CD4-positive, alpha-beta memory T cell (primary cell): ENCODE measurements at regions of chr20 and their contacts with region 1.

Region 1: DNA sequence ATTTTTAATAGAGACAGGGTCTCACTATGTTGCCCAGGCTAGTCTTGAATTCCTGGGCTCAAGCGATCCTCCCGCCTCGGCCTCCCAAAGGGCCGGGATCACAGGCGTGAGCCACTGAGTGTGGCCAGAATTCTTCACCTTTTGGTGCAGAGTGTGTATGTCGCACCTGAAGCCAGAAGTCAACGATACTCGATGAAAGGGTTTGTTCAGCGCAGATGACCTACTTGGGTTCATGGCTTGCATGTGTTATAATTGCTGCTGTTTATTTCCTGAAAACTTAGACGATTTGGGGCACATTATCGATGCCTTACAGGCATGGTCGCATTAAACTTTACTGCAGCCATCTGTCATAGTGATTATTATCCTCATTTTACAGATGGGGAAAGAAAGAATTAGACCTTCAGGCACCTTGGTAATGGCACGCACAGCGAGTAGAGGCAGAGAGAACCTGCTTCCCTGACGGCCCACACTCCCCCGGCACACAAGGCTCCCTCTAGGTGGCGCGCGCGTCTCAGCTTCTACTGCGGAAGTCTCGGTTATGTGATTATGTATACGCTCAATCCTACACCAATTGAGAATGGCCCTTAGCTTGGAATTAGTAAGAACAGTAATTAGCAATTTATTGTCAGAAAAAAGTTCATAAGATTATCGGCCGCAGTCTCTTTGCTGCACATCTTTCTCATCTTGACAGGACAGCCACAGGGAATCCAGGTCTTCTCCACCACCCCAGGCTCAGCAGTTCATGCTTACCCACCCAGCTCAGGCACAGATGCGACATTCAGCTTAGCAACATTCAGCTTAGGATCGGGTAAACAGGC is 212.8 kb upstream of the PROKR2 start:
- DNase-seq: peak; percentile 75 to 85 (median 76)
- H3K4me3 ChIP-seq: no peak overlapping the region
- H3K4me3 Mint-ChIP-seq: peak overlapping the region; percentile 11 to 81 (median 70)
- H3K27ac ChIP-seq: no peak overlapping the region
- H3K27ac Mint-ChIP-seq: peak overlapping the region; percentile 15 to 92 (median 76)
- H3K4me1 ChIP-seq: peaks cover 3% of the 10 kb centered on the region
- H3K4me1 Mint-ChIP-seq: peaks cover 12 to 19% (median 15%) of the 10 kb centered on the region in 4 donors
- H3K27me3 ChIP-seq: no peaks in the 10 kb centered on the region
- H3K27me3 Mint-ChIP-seq: peaks cover 0 to 1% of the 10 kb centered on the region in 2 donors

Region 2: GRCh38 chr20:5539691-5540090 is 10.2 kb after region 1 on chr20:
- CTCF ChIA-PET with region 1: interaction called, 12 read pairs
- POLR2A ChIA-PET with region 1: no interaction called
- intact Hi-C with region 1: no loop called
- DNase-seq: no peak
- H3K4me3 ChIP-seq: no peak overlapping the region
- H3K4me3 Mint-ChIP-seq: no peak overlapping the region
- H3K27ac ChIP-seq: no peak overlapping the region
- H3K27ac Mint-ChIP-seq: peak overlapping the region in 3 of 7 donors; percentile 2 to 82 (median 48)
- H3K4me1 ChIP-seq: no peaks in the 10 kb centered on the region
- H3K4me1 Mint-ChIP-seq: peaks cover 0 to 4% (median 2%) of the 10 kb centered on the region in 4 donors
- H3K27me3 ChIP-seq: no peaks in the 10 kb centered on the region
- H3K27me3 Mint-ChIP-seq: no peaks in the 10 kb centered on the region

Region 3: GRCh38 chr20:5569021-5569420 is 39.5 kb after region 1 on chr20:
- CTCF ChIA-PET with region 1: interaction called, 13 read pairs
- POLR2A ChIA-PET with region 1: no interaction called
- intact Hi-C with region 1: loop called (anchors 1 kb)
- DNase-seq: peak; percentile 51 to 65 (median 61)
- H3K4me3 ChIP-seq: no peak overlapping the region
- H3K4me3 Mint-ChIP-seq: no peak overlapping the region
- H3K27ac ChIP-seq: no peak overlapping the region
- H3K27ac Mint-ChIP-seq: peak overlapping the region; percentile 8 to 89 (median 65)
- H3K4me1 ChIP-seq: peaks cover 19% of the 10 kb centered on the region
- H3K4me1 Mint-ChIP-seq: peaks cover 17 to 26% (median 21%) of the 10 kb centered on the region in 4 donors
- H3K27me3 ChIP-seq: no peaks in the 10 kb centered on the region
- H3K27me3 Mint-ChIP-seq: no peaks in the 10 kb centered on the region

Region 4: GRCh38 chr20:5933802-5934436 is 404.4 kb after region 1 on chr20:
- CTCF ChIA-PET with region 1: interaction called, 4 read pairs
- POLR2A ChIA-PET with region 1: no interaction called
- intact Hi-C with region 1: loop called (anchors 1 kb)
- DNase-seq: peak in 1 of 5 donors; percentile 23
- H3K4me3 ChIP-seq: no peak overlapping the region
- H3K4me3 Mint-ChIP-seq: no peak overlapping the region
- H3K27ac ChIP-seq: no peak overlapping the region
- H3K27ac Mint-ChIP-seq: peak overlapping the region in 1 of 7 donors; percentile 74
- H3K4me1 ChIP-seq: no peaks in the 10 kb centered on the region
- H3K4me1 Mint-ChIP-seq: peaks cover 0 to 3% (median 0%) of the 10 kb centered on the region in 4 donors
- H3K27me3 ChIP-seq: no peaks in the 10 kb centered on the region
- H3K27me3 Mint-ChIP-seq: peaks cover 0 to 2% of the 10 kb centered on the region in 2 donors

Region 5: GRCh38 chr20:6008254-6008653 is 478.7 kb after region 1 on chr20:
- CTCF ChIA-PET with region 1: interaction called, 4 read pairs
- POLR2A ChIA-PET with region 1: no interaction called
- intact Hi-C with region 1: loop called (anchors 1 kb)
- DNase-seq: no peak
- H3K4me3 ChIP-seq: no peak overlapping the region
- H3K4me3 Mint-ChIP-seq: peak overlapping the region in 5 of 8 donors; percentile 13 to 99 (median 41)
- H3K27ac ChIP-seq: no peak overlapping the region
- H3K27ac Mint-ChIP-seq: peak overlapping the region in 3 of 7 donors; percentile 37 to 86 (median 72)
- H3K4me1 ChIP-seq: peaks cover 33% of the 10 kb centered on the region
- H3K4me1 Mint-ChIP-seq: peaks cover 28 to 57% (median 36%) of the 10 kb centered on the region in 4 donors
- H3K27me3 ChIP-seq: no peaks in the 10 kb centered on the region
- H3K27me3 Mint-ChIP-seq: no peaks in the 10 kb centered on the region